Mucosa of descending colon (tissue), 3 donors: ENCODE measurements at regions of chr1 and their contacts with region 1.

Region 1: GRCh38 chr1:200620273-200621131 is at the start of gene KIF14:
- DNase-seq: peak; percentile 95 to 96 (median 96)
- ATAC-seq: peak; percentile 100
- H3K4me3 ChIP-seq: peak within 1 kb of the TSS; percentile 9
- H3K4me1 ChIP-seq: peaks cover 14% of the 10 kb centered on the region
- CTCF ChIP-seq: no peak
- total RNA-seq, gene KIF14: 0.60 to 3.0 (median 0.81) TPM

Region 2: DNA sequence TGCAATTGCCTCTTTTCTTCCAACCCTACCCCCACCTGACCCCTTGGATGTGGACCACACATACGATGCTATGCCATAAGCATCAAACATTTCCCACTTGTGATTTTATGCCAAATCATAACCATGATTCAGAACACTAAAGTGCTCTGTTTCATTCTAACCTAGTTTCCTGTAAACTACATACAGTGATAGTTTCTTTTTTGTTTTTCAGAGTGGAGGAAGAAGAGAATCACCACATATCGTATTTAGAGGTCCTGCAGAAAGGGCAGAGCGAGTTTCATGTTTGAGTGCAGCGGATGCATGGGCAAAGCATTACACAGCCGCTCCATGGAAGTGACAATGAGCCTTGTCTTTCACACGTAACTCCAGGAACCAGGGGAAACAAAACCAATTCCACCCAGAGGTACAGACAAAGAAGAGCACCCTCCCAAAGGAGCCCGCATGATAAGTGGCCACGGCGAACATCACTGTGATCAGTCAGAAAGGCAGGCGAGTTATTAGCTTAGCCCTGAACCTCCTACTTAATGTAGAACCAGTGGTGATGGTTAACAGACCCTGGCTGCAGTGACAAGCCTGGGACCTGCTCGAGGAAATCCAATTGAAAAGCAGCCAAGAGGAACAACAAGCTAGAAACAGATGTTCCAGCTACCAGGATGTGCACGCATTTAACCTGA is 146.7 kb before region 1 on chr1:
- intact Hi-C with region 1: no loop called
- DNase-seq: no peak
- ATAC-seq: peak; percentile 24
- H3K4me3 ChIP-seq: no peak overlapping the region
- H3K4me1 ChIP-seq: no peaks in the 10 kb centered on the region
- CTCF ChIP-seq: no peak

Region 3: GRCh38 chr1:200802865-200803512 is 182.5 kb after region 1 on chr1:
- intact Hi-C with region 1: loop called (anchors 5 to 10 kb)
- DNase-seq: peak in 2 of 3 donors; percentile 72 to 93
- ATAC-seq: peak; percentile 96
- H3K4me3 ChIP-seq: no peak overlapping the region
- H3K4me1 ChIP-seq: no peaks in the 10 kb centered on the region
- CTCF ChIP-seq: peak; percentile 83